ENCODE measurements at regions of chr13 and their contacts with region 1.

Region 1: DNA sequence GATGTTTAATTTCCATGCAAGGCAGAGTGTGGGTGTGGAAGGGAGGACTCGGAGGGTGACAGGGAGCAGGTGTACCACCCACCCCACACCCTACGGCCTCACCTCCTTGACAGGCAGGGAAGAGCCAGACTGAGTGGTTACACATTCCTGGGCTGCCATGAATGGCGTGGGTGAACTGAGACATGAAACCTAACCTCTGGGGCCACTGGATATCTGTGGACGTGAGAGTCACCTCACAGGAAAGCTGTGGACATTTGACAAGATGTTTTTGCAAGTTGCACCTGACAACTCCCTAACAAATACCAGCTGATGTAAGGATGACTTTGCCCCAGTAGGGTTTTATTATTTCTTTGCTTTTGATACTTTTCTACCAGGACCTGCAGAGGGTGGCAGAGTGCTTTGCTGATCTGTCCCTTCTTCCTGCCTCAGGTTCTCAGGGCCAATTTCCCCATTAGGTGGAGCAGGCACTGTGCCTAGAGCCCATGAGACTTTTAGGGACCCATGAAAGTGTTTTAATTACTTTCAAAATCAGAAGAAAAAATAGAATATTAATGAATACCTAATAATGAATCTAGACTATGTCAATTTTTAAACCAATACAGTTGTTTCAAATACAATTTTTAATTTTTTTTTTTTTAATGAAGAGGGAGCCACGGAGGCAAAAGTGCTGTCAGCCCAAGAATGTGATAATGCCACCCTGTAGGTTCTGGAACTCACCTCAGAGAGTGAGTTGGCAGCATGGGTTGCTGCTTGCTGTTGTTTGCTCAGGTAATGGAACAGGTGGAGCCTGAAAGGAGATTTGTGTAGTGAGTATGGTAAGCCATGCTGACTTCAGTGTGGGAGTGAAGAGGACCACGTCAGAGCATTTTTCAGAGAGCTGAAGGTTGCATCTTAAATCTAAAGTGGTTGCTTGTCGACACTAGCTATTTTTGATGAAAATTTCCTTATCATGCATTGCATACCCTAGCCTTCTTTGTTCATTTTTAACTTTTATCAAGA is 58.0 kb upstream of the CYSLTR2 start:
- DNase-seq: peak; percentile 80

Region 2: DNA sequence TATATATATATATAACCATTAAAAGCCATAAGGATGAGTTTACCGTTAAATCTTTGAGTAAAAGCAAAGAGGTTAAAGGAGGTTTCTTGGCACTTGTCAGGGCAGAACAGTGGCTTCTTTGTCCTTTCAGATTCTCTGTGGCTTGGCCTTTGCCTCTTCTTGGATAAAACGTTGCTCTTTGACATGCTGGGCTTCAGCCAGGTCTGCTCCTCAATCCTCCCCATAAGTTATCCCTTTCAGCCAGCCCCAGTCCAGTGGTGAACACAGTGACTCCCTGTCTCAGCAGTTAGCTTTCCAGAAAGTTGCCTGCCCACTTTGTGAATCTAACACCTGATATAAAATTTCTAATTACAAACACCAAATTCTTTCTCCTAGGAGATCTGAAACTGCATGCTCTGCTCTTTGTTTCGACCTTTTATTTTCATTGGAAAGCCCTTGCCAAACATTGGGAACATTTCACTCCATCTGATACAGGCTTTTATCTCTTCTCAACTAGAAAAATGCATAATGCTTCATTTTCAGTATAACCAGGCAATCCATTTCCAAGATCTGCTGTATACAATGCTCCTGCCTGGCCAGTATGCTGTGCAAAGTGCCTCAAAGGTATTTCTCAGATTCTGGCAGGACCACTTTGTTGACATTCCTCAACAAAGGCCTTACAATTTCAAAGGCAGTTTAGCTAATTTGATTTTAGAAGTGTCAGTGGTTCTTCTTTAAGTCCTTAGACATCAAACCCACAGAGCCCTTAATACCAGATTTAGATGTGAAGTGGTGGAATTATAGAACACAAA is 484.6 kb before region 1 on chr13:
- in situ Hi-C with region 1: loop called (anchors 25 kb)
- DNase-seq: no peak

Region 3: DNA sequence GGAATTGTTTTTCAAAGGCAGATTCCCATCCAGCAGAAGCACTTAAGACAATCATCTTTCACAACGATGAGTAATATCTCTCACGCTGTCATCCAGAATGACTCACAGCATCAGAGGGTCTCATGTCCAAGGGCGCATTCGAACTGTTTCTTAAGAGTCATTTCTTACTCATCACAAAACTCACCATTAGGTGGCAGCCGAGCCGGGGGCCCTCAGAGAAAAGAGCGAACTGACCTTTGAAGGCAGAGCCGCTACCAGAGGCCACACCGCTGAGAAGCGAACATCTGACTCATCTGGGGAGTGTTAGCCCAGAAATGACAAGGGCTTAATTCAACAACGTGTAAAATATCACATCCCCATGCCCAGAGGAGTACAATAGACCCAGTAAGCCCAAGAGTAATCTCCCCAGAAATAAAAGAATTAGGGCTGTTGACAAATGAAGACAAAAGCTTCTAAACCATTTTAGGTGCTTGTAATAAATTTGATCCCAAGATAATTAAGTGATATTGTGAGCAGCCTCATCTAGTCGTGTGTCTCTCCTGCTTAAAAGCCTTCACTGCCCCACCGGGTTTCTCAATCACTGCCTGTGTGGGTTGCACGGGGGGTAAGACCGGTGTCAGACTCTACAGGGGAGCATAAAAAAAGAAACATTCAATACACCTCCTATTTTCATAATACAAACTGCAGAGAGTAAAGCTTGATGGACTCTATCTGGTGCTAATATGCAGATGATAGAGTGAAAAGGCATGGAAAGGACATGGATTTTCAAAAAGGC is 154.2 kb after region 1 on chr13:
- in situ Hi-C with region 1: loop called (anchors 10 kb)
- DNase-seq: no peak

Region 4: DNA sequence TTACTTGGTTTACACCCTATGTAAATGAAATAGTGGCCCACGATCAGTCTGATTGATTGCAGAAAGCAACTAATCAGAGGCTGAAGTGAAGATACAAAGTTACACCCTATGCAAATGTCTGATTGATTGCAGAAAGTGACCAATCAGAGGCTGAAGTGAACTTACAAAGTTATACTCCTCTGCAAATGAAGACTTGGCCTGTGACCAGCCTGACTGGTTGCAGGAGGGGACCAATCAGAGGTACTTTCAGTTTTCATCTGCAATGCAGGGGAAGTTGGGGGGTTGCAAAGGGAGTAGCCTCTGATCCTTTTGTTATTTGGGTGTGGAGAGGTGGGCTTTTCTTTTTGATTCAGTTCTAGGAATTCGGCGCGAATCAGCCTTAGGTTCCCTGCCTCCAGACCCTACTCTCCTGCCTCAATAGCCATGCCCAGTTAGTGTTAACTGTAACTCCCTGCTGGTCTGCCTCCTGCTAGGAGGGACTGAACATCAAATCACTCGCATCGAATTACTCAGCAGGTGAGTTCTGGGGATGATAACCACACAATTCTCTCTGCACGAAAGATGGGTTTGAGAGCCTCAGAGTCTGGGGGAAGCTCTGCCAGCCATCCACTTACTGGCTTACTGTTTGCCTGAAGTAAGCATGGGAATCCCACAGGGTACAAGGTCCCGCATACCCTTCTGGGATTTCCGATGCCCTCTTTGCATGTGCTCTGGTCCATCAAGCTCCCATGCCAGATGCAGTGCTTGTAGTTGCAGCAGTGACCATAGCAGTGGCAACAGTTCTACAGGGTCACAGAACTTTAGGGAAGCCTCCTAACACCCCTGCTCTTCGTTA is 1040.1 kb after region 1 on chr13:
- in situ Hi-C with region 1: no loop called
- DNase-seq: no peak

Measured in KBM-7 (cell line).